ENCODE measurements at regions of chr1 and their contacts with region 1.

Region 1: DNA sequence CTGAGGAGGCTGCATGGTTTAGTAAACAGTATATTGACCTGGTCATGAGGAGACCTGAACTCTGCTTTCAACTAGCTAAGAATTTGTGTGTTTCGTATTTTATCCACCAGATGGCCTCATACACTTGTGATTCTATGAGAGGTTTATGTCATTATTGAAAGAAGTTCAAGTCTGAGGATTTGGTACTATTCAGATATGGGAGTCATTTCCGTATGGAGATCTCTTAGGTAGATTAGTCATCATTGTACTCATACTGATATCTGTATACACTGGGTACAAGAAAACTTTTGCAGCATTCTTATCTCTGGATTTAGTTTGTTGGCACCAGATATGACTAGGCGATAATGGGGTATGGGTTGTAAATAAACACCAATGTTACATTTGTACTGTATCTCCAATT is 26.6 kb downstream of the ATF6 start:
- ATAC-seq: peak in 7 of 8 experiments; percentile 29 to 99 (median 61)
- H3K4me3 ChIP-seq: no peak overlapping the region
- H3K27ac ChIP-seq: no peak overlapping the region
- H3K4me1 ChIP-seq: no peaks in the 10 kb centered on the region

Region 2: GRCh38 chr1:161973924-161974845 is 181.4 kb after region 1 on chr1:
- in situ Hi-C with region 1: no loop called
- ATAC-seq: peak in 3 of 8 experiments; percentile 8 to 31 (median 24)
- H3K4me3 ChIP-seq: no peak overlapping the region
- H3K27ac ChIP-seq: no peak overlapping the region
- H3K4me1 ChIP-seq: peaks cover 0 to 6% of the 10 kb centered on the region in 2 donors

Region 3: DNA sequence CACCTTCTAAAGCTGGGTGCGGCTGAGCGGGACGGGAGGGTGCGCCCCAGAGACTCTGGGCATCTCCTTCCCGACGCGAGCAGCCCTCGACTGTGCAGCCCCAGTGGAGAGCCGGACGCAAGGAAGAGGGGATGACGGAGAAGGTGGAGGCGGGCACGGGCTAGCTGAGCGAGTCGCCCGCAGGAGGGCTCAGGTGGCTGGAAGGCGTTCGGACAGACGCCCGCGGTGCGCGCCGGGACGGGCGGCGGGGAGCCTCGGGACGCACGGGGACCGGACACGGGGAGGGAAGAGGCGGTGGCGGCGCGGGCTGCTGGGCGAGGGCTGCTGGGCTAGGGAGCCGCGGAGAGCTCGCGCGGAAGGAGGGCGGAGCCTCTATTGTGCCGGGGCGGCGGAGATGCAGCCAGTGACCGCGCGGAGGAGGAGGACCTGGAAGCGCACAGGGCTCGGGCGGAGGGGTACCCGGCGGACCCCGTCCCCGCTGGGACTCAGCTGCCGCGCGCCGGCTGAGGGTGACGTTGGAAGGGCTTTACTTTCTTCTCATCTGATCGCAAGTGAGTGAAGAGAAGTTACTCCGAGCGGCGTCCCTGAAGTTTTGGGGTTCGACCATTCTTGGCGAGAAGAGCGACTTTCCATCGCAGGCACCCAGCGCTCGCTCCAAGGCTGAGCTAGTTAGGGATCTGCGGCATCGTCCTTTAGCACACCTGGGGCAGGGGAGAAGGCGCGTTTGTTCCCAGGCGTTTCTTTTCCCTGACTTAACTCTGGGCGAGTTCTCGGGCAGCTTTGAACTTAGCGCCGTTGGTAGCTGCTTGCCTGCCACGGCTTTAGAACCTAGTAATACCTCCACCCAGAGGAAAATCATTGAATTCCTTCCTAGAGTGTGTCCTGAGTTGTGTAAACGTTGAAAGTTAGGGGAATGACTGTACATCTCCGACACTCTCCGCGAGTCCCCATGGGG is 231.1 kb after region 1 on chr1 and contains the start of gene OLFML2B:
- in situ Hi-C with region 1: loop called in 5 of 9 experiments (anchors 10 to 25 kb)
- ATAC-seq: peak; percentile 83 to 95 (median 93)
- H3K4me3 ChIP-seq: peak within 1 kb of the TSS; percentile 44 to 57 (median 52)
- H3K27ac ChIP-seq: no peak within 1 kb of the TSS
- H3K4me1 ChIP-seq: peaks cover 6 to 11% of the 10 kb centered on the region in 2 donors
- total RNA-seq, gene OLFML2B: 1.0 to 15.3 (median 2.2) TPM

Region 4: GRCh38 chr1:162040681-162041080 is 247.9 kb after region 1 on chr1:
- in situ Hi-C with region 1: loop called in 5 of 9 experiments (anchors 10 to 25 kb)
- ATAC-seq: peak in 1 of 8 experiments; percentile 28
- H3K4me3 ChIP-seq: no peak overlapping the region
- H3K27ac ChIP-seq: no peak overlapping the region
- H3K4me1 ChIP-seq: no peaks in the 10 kb centered on the region

Region 5: DNA sequence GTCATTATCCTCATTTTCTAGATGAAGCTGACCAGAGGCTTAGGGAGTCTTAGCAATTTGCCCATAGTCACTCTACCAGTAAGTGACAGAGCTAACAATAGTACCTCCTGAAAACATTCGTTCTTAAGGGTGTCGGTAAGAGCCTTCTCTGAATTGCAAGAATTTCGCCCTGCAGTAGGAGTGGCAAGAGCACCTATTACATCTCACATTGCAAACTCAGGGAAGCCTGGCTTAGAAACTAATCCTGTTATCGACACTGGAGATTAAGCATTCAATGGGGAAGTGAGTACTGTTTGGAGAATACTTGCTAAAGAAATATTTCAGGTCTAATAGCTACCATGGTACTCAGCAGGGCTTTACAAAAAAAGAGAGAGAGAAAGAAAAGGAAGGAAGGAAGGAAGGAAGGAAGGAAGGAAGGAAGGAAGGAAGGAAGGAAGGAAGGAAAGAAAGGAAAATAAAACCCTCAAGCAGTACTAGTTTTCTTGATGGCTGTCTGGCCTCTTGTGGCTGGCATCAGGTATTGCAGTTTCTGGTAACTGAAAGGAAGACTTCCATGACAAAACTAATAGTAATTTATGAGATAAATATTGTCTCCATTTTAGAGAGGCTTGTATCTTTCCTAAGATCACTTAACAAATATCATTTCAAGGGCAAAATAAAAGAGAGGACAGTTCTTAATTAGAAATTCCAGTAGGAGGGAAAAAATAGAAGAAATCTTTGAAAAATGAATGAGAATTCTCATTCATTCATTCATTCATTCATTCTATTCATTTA is 599.2 kb after region 1 on chr1:
- in situ Hi-C with region 1: loop called in 1 of 9 experiments (anchors 25 kb)
- ATAC-seq: peak; percentile 37 to 61 (median 42)
- H3K4me3 ChIP-seq: no peak overlapping the region
- H3K27ac ChIP-seq: no peak overlapping the region
- H3K4me1 ChIP-seq: peaks cover 29 to 36% of the 10 kb centered on the region in 2 donors